ENCODE measurements at regions of chr10 and their contacts with region 1.

Region 1: DNA sequence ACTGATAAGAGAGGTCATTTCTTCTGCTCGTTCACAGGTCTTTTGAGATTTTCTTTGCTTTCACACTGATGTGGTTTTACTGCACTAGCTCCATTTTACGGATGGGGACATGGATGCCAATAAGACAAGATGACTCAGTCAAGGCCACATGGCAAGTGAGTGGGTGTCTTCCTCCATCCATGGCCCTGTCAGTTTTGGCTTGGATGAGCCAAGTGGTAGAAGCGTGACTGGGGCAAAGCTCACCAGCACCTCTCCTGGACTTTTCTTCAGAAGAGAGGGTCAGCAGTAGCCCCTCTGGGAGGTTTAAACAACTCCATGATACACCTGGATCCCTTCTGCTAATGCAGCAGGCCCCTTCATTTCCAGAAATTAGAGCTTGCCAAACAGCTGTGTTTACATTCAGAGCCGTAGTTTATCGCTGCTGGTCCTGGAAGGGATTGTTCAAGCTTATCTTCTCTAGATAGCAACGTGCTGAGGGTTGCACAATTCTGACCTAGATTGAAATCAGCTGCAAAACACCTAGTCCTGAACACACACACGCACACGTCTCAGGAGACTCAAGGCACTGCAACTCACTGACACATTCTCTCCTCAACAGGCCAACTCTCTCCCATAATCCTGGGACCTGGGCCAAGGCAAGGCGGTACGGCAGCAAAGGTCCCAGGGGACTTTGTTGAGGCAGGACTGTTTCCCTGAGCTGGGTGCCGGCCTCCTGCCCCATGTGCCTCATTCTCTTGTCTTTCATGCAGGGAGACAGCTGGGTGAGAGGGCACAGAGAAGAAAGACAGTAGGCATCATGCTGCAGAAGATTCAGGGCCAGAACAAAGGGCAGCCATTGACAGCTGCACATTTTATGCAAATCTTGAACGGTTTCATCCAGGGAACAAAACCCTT is 14.2 kb upstream of the PDCD4 start:
- DNase-seq: peak in 1 of 3 donors; percentile 48
- H3K4me3 ChIP-seq: no peak overlapping the region
- H3K27ac ChIP-seq: peak overlapping the region in 1 of 2 experiments; percentile 32
- H3K4me1 ChIP-seq: peaks cover 22 to 51% (median 37%) of the 10 kb centered on the region in 4 experiments
- H3K27me3 ChIP-seq: no peaks in the 10 kb centered on the region

Region 2: GRCh38 chr10:110733218-110733952 is 124.1 kb before region 1 on chr10:
- CTCF ChIA-PET with region 1: no interaction called
- POLR2A ChIA-PET with region 1: no interaction called
- DNase-seq: peak in 2 of 3 donors; percentile 12 to 17
- H3K4me3 ChIP-seq: peak overlapping the region in 1 of 7 experiments; percentile 25
- H3K27ac ChIP-seq: no peak overlapping the region
- H3K4me1 ChIP-seq: no peaks in the 10 kb centered on the region
- H3K27me3 ChIP-seq: peaks cover 0 to 26% (median 16%) of the 10 kb centered on the region in 5 experiments

Region 3: DNA sequence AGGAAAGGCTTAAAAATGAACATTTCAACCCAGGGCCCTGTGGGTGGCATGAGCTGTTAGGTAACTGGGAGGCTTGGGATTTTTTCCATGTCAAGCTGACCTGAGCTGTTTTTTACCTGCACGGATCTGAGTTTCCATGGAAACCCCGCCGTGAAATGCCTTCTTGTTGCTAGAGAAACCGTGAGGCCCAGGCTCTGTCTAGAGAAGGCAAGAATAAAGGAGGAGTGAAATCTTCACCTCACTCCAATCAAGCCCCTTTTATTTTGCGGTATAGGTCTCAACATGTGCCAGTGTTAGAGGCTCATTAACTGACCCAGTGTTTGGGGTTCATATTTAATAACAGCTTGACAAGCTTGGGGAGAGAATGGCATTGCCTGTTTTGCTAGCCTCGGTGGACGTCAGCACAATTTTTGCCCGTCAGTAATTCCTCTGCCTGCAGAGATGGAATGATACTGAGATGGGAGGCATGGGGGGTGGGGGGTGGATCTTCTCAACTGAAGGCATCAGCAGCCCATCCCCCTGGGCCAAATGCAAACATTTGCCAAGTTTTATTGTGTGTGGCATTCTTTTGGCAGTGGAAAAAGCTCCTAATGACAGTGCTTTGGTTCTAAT is 34.7 kb before region 1 on chr10:
- CTCF ChIA-PET with region 1: no interaction called
- POLR2A ChIA-PET with region 1: no interaction called
- DNase-seq: no peak
- H3K4me3 ChIP-seq: no peak overlapping the region
- H3K27ac ChIP-seq: no peak overlapping the region
- H3K4me1 ChIP-seq: peaks cover 0 to 8% (median 2%) of the 10 kb centered on the region in 4 experiments
- H3K27me3 ChIP-seq: no peaks in the 10 kb centered on the region

Region 4: GRCh38 chr10:110843031-110843430 is 14.5 kb before region 1 on chr10:
- CTCF ChIA-PET with region 1: interaction called, 34 read pairs
- POLR2A ChIA-PET with region 1: no interaction called
- DNase-seq: peak; percentile 69 to 92 (median 91)
- H3K4me3 ChIP-seq: no peak overlapping the region
- H3K27ac ChIP-seq: peak overlapping the region in 1 of 2 experiments; percentile 64
- H3K4me1 ChIP-seq: peaks cover 2 to 23% (median 16%) of the 10 kb centered on the region in 4 experiments
- H3K27me3 ChIP-seq: no peaks in the 10 kb centered on the region

Region 5: DNA sequence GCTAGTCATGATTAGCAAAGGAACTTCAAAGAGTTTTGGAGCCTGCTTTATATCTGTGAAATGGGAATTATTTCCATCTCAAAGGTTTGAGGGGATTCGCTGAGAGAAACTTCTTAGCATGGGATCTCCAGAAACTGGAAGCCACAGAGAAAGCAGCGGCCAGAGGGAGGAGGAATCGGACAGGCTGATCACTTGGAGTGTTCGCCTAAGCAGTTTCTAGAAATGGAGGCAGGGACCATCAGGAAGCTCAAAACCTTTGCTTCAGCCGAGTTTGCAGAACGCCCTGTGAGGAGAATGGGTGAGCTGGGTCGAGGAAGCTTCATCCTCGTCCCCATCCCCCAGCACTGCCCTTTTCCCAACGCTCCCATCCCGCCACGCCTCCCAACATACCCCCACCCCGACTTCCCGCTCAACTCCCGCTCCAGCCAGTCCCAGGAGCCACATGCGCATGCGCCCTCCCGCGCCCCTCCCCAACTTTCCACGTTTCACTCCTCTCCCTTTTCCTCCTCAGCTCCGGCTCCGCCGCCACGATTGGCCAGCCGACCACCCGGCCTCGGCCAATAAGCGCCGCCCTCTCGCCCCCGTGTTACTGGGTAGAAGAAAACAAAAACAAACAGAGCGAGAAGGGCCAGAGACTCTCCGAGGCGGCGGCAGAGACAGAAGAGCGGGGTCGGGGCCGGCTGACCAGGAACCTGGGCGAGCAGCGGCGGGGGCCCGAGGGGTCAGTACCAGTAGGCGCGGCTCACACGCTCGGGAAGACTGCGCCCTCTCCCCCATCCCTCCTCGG is 14.0 kb after region 1 on chr10 and contains the start of gene PDCD4:
- CTCF ChIA-PET with region 1: interaction called, 18 read pairs
- POLR2A ChIA-PET with region 1: interaction called, 5 read pairs
- DNase-seq: peak; percentile 94 to 96 (median 95)
- H3K4me3 ChIP-seq: peak within 1 kb of the TSS; percentile 45 to 93 (median 79)
- H3K27ac ChIP-seq: peak within 1 kb of the TSS; percentile 86 to 90
- H3K4me1 ChIP-seq: peaks cover 42 to 64% (median 56%) of the 10 kb centered on the region in 4 experiments
- H3K27me3 ChIP-seq: no peaks in the 10 kb centered on the region

Measured in common myeloid progenitor, CD34-positive (primary cell).